ENCODE measurements at regions of chr7 and their contacts with region 1.

Region 1: DNA sequence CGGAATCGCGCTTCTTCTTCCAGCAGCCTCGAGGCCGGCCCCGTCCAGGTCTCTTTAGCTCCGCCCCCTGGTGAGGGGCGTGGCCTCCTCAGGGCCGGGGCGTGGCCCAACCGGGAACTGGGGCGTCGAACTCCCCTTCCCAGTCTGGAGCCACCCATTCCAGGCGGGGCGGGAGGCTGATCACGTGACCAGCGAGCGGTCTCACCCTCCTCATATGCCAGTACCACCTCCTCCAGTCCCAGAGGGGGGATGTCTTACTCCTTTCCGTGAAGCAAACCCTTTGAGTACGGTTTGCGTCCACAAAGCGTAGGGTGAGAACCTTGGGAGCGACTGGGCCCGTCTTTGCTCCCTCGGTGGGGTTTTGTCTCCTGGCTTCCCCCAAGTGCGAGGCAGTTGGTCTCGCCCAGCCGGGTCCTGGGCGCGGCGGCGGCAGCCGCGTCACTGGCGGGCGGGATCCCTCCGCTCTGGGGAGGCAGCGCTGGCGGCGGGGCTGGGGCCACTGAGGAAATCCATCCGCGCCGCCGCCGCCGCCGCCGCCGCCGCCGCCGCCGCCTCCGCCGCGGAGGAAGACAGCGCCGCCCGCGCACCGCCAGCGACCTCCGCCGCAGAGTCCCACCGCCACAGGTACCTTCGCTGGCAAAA is at the start of gene GNB2:
- DNase-seq: peak; percentile 99
- H3K4me3 Mint-ChIP-seq: peak within 1 kb of the TSS; percentile 98
- H3K27ac Mint-ChIP-seq: peak within 1 kb of the TSS; percentile 94
- H3K4me1 Mint-ChIP-seq: peaks cover 10% of the 10 kb centered on the region
- H3K27me3 Mint-ChIP-seq: peaks cover 10% of the 10 kb centered on the region
- total RNA-seq, gene GNB2: 218 and 221 TPM in 2 replicates

Region 2: GRCh38 chr7:99794585-99795502 is 878.6 kb before region 1 on chr7:
- intact Hi-C with region 1: no loop called
- DNase-seq: no peak
- H3K4me3 Mint-ChIP-seq: no peak overlapping the region
- H3K27ac Mint-ChIP-seq: no peak overlapping the region
- H3K4me1 Mint-ChIP-seq: peaks cover under 1% of the 10 kb centered on the region
- H3K27me3 Mint-ChIP-seq: peaks cover 6% of the 10 kb centered on the region

Region 3: DNA sequence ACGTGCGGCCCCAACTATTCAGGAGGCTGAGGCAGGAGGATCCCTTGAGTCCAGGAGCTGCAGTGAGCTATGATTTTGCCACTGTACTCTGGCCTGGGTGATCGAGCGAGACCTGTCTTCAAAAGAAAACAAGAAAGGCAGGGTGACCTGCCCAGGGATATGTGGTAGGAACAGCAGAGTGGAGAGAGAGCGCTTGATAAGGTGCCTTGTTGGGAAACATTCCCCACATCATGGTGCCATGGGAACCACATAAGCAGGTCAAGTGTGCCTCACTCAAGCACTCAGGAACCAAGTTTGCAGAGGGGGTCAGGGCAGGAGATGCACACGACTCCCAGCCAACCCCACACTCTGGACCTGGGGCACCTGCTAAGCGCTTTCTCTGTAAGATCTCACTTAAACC is 416.4 kb before region 1 on chr7:
- intact Hi-C with region 1: no loop called
- DNase-seq: no peak
- H3K4me3 Mint-ChIP-seq: no peak overlapping the region
- H3K27ac Mint-ChIP-seq: no peak overlapping the region
- H3K4me1 Mint-ChIP-seq: no peaks in the 10 kb centered on the region
- H3K27me3 Mint-ChIP-seq: no peaks in the 10 kb centered on the region

Region 4: DNA sequence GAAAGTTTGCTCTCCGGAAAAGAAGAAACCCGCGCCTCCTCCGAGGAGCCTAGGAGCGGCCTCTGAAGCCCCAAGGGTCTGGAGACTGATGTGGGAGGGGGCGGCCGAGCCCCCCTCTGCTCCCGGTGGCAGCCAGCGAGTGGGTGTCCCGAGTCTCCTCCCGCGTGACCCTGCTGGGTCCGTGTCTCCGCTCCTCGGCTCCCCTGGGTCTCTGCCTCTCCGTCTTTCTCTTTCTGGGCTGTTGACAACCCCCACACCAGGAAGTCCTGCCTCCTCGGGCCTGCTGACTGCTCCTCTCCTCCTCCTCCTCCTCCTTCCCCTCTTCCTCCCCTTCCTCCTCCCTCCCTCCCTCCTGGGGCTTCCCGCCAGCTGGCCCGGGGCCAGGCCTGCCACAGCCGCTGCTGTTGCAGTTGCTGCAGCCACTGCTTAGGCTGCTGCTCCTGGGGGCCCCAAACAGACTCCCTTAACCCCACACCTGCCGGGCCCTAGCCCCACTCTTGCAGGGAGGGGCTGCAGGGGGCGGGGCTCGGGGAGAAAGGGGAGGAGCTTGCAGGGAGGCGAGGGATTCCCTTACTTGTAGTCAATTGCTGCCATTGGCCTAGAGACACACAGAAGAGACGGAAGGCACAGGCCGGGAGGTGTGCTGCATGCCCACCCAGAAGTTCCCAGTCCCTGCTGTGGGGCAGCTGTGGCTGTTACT is 194.3 kb before region 1 on chr7 and contains the start of gene TSC22D4:
- intact Hi-C with region 1: loop called (anchors 2 kb)
- DNase-seq: peak; percentile 85
- H3K4me3 Mint-ChIP-seq: peak within 1 kb of the TSS; percentile 99
- H3K27ac Mint-ChIP-seq: peak within 1 kb of the TSS; percentile 93
- H3K4me1 Mint-ChIP-seq: peaks cover 35% of the 10 kb centered on the region
- H3K27me3 Mint-ChIP-seq: peaks cover 6% of the 10 kb centered on the region
- total RNA-seq, gene TSC22D4: 126 and 134 TPM in 2 replicates

Region 5: GRCh38 chr7:100604028-100604975 is 69.1 kb before region 1 on chr7:
- intact Hi-C with region 1: loop called (anchors 1 kb)
- DNase-seq: peak; percentile 61
- H3K4me3 Mint-ChIP-seq: peak overlapping the region; percentile 81
- H3K27ac Mint-ChIP-seq: peak overlapping the region; percentile 84
- H3K4me1 Mint-ChIP-seq: peaks cover 15% of the 10 kb centered on the region
- H3K27me3 Mint-ChIP-seq: peaks cover 13% of the 10 kb centered on the region

Region 6: DNA sequence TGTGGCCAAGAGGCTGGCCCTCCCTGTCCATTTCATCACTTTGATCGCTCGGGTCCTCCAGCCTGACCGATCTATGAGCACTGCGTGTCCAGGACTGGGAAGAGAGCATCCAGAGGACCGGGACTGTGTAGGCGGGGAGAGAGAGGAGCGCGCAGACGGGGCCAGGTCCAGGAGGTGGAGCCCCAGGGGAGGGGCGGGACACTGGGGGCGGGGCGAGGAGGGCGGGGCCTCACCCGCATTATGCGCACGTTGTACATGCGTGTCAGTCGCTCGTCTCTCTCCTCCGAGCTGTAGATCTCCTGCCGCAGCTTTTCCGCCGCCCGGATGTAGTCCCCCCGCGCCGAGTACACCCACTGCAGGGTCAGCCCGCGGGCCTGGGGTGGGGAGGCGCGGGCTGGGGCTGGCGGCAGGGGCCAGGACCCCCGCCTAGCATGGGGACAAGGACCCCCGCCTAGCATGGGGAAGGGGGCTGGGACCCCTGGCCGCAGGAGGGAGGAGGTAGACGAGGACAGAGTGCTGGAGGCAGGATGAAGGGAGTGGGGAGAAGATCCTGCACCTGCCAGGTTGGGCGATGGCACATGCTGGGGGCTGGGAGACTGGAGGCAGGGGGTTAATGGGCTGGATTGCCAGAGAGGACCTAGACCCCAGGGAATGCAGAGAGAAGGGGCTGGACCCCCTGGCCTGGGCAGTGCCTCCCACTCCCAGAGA is 46.7 kb before region 1 on chr7:
- intact Hi-C with region 1: loop called (anchors 1 kb)
- DNase-seq: peak; percentile 79
- H3K4me3 Mint-ChIP-seq: peak overlapping the region; percentile 71
- H3K27ac Mint-ChIP-seq: peak overlapping the region; percentile 63
- H3K4me1 Mint-ChIP-seq: peaks cover 45% of the 10 kb centered on the region
- H3K27me3 Mint-ChIP-seq: no peaks in the 10 kb centered on the region

Region 7: GRCh38 chr7:100655908-100656674 is 17.3 kb before region 1 on chr7 and contains the start of gene ACTL6B:
- intact Hi-C with region 1: loop called (anchors 1 kb)
- DNase-seq: peak; percentile 67
- H3K4me3 Mint-ChIP-seq: no peak within 1 kb of the TSS
- H3K27ac Mint-ChIP-seq: no peak within 1 kb of the TSS
- H3K4me1 Mint-ChIP-seq: no peaks in the 10 kb centered on the region
- H3K27me3 Mint-ChIP-seq: peaks cover 33% of the 10 kb centered on the region
- total RNA-seq, gene ACTL6B: not detected in 2 replicates

Region 8: GRCh38 chr7:100705753-100706671 is 32.6 kb after region 1 on chr7 and contains the start of gene POP7:
- intact Hi-C with region 1: loop called (anchors 1 kb)
- DNase-seq: peak; percentile 99
- H3K4me3 Mint-ChIP-seq: peak within 1 kb of the TSS; percentile 98
- H3K27ac Mint-ChIP-seq: peak within 1 kb of the TSS; percentile 98
- H3K4me1 Mint-ChIP-seq: peaks cover 7% of the 10 kb centered on the region
- H3K27me3 Mint-ChIP-seq: peaks cover 13% of the 10 kb centered on the region
- total RNA-seq, gene POP7: 82.7 and 84.4 TPM in 2 replicates

Measured in activated T-helper 1 cell treated with anti-CD3 and anti-CD28 coated beads, Interleukin-12 subunit alpha, Interleukin-12 subunit beta, Interleukin-2, Interleukin-4 antibody, amounts not matched to agents 30 ng/mL and 10 ng/mL and 1 ng/mL, durations not matched to agents 14 hours and 24 hours and 36 hours (primary cell).